Heart right ventricle (tissue), 16 donors: ENCODE measurements at regions of chr6 and their contacts with region 1.

Region 1: GRCh38 chr6:1596088-1596852 is 13.4 kb upstream of the FOXC1 start:
- DNase-seq: peak; percentile 58 to 61
- ATAC-seq: peak; percentile 73 to 90 (median 82)
- H3K4me3 ChIP-seq: peak overlapping the region in 9 of 10 donors; percentile 7 to 47 (median 33)
- H3K27ac ChIP-seq: no peak overlapping the region
- H3K4me1 ChIP-seq: peaks cover 0 to 11% (median 7%) of the 10 kb centered on the region in 9 donors
- H3K27me3 ChIP-seq: peaks cover 4 to 81% (median 52%) of the 10 kb centered on the region in 7 donors
- CTCF ChIP-seq: peak; percentile 86 to 98 (median 94)

Region 2: GRCh38 chr6:2448820-2449571 is 852.7 kb after region 1 on chr6:
- intact Hi-C with region 1: loop called in 5 of 10 experiments (anchors 5 to 10 kb)
- DNase-seq: peak in 1 of 2 donors; percentile 36
- ATAC-seq: peak in 5 of 8 donors; percentile 61 to 71 (median 67)
- H3K4me3 ChIP-seq: peak overlapping the region in 5 of 10 donors; percentile 5 to 28 (median 18)
- H3K27ac ChIP-seq: no peak overlapping the region
- H3K4me1 ChIP-seq: peaks cover 0 to 19% (median 10%) of the 10 kb centered on the region in 9 donors
- H3K27me3 ChIP-seq: no peaks in the 10 kb centered on the region
- CTCF ChIP-seq: peak in 8 of 9 donors; percentile 21 to 73 (median 65)

Region 3: GRCh38 chr6:2641044-2641725 is 1044.9 kb after region 1 on chr6:
- intact Hi-C with region 1: loop called in 2 of 10 experiments (anchors 5 kb)
- DNase-seq: no peak
- ATAC-seq: no peak
- H3K4me3 ChIP-seq: no peak overlapping the region
- H3K27ac ChIP-seq: no peak overlapping the region
- H3K4me1 ChIP-seq: no peaks in the 10 kb centered on the region
- H3K27me3 ChIP-seq: peaks cover 0 to 21% (median 3%) of the 10 kb centered on the region in 7 donors
- CTCF ChIP-seq: no peak

Region 4: DNA sequence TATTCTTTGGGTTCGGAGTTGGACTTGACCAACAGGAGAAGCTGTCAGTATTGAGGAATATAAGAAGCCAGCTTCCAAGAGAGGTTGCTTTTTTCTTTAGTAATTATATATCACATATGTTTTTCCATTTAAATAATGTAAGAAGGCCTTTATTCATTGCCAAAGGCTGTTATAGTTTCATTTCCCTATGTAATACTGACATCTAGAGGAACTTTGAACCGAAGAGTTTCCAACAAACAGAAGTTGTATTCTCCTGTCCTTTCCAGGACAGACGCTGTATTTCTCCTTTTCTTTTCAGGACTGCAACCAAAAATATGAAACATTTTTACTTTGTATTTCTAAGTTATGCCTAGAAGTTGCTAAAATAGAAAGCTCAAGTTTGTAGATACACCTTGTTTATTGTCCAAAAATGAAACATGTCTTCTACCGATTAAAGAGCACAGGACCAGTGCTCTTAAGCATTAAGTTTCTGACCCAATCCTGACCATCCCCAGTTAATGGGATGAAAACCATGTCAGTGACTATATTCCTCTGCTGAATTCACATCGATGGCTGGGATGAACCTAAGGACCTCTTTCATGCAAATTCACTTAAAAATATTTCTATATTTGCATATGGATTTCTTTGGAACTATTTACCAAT is 1099.3 kb after region 1 on chr6:
- intact Hi-C with region 1: loop called in 5 of 10 experiments (anchors 5 to 10 kb)
- DNase-seq: no peak
- ATAC-seq: peak in 3 of 8 donors; percentile 47 to 54 (median 48)
- H3K4me3 ChIP-seq: no peak overlapping the region
- H3K27ac ChIP-seq: no peak overlapping the region
- H3K4me1 ChIP-seq: peaks cover 0 to 7% (median 0%) of the 10 kb centered on the region in 9 donors
- H3K27me3 ChIP-seq: no peaks in the 10 kb centered on the region
- CTCF ChIP-seq: peak; percentile 7 to 66 (median 52)

Region 5: DNA sequence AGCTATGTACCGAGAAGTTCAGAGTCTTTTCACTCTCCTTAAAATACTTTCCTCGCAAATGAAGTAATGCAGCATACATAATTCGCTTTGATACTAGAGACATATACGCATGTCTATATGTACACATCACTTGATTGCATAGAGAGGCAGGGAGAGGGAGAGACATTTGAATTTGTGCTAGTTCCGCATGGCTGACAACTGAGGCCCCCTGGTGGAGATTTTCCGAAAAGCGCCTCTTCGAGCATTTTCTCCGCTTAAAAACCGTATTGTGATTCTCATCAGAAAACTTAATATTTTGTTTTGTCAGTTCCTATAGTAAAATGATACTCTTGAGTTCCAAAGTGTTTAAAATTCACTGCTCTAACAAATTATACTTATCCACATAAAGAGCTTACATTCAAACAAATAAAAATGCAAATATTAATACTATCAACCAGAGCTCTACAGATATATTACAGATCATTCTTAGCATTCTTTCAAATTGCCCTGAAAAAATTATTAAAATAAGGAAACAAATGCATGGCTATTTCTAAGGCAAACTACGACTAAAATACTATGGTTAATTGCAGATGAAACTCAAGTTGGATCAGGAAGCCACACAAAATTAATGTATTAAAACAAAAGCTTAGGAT is 1153.8 kb after region 1 on chr6:
- intact Hi-C with region 1: loop called in 4 of 10 experiments (anchors 5 kb)
- DNase-seq: peak; percentile 46 to 60
- ATAC-seq: peak in 4 of 8 donors; percentile 33 to 58 (median 44)
- H3K4me3 ChIP-seq: peak overlapping the region in 6 of 10 donors; percentile 16 to 42 (median 28)
- H3K27ac ChIP-seq: no peak overlapping the region
- H3K4me1 ChIP-seq: peaks cover 0 to 24% (median 14%) of the 10 kb centered on the region in 9 donors
- H3K27me3 ChIP-seq: no peaks in the 10 kb centered on the region
- CTCF ChIP-seq: peak; percentile 82 to 93 (median 90)